IMR-90 (cell line): ENCODE measurements at regions of chr18 and their contacts with region 1.

Region 1: GRCh38 chr18:6885992-6886796 is 156.7 kb downstream of the ARHGAP28 start:
- DNase-seq: peak; percentile 59
- ATAC-seq: peak; percentile 83
- H3K4me3 ChIP-seq: no peak overlapping the region
- H3K27ac ChIP-seq: no peak overlapping the region; the same call in 1 of the 2 replicates
- H3K4me1 ChIP-seq: peaks cover 3% of the 10 kb centered on the region
- H3K27me3 ChIP-seq: no peaks in the 10 kb centered on the region
- CTCF ChIP-seq: peak; percentile 88
- POLR2A ChIP-seq: 0 out of 2 replicates have a peak, but pooled peaks have one; percentile 40
- RAD21 ChIP-seq: peak; percentile 97

Region 2: DNA sequence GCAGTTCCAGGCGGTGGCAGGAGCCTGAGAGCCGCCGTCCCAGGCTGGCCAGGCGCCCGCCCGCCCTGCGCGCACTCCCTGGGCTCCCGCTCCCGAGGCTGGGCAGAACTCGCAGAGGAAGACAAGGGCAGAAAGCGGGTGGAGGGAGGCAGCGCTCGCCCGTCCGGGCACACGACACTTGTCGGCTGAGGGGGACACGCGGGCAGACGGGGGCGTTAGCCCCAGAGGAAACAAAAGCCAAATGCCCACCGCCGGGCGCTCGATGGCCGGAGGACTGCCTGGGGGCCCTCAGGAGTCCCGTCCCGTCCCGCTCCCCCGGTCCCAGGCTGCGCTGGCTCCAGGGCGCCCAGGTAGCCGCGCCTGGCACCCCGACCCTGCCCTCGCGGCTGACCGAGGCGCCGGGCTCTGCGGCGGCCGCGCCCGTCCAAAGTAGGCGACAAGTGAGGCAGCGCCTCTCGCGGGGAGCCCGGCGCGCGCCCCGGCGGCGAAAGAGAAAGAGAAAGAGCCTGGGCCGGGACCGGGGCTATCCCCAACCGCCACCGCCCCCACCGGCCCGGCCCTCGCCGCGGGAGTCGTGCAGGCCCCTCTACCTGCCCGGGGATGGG is 472.0 kb before region 1 on chr18:
- CTCF ChIA-PET with region 1: no interaction called
- POLR2A ChIA-PET with region 1: no interaction called
- dilution Hi-C with region 1: no loop called
- in situ Hi-C with region 1: no loop called
- intact Hi-C with region 1: loop called (anchors 10 kb)
- DNase-seq: no peak
- ATAC-seq: peak; percentile 93
- H3K4me3 ChIP-seq: peak overlapping the region; percentile 44
- H3K27ac ChIP-seq: no peak overlapping the region
- H3K4me1 ChIP-seq: no peaks in the 10 kb centered on the region
- H3K27me3 ChIP-seq: peaks cover 34% of the 10 kb centered on the region
- CTCF ChIP-seq: no peak
- POLR2A ChIP-seq: no peak
- RAD21 ChIP-seq: no peak

Region 3: GRCh38 chr18:6561420-6561861 is 324.8 kb before region 1 on chr18:
- CTCF ChIA-PET with region 1: interaction called, 9 read pairs
- POLR2A ChIA-PET with region 1: no interaction called
- dilution Hi-C with region 1: no loop called
- in situ Hi-C with region 1: no loop called
- intact Hi-C with region 1: loop called (anchors 5 kb)
- DNase-seq: peak; percentile 67
- ATAC-seq: peak; percentile 76
- H3K4me3 ChIP-seq: no peak overlapping the region
- H3K27ac ChIP-seq: peak overlapping the region; percentile 32; the same call in 1 of the 2 replicates
- H3K4me1 ChIP-seq: peaks cover 3% of the 10 kb centered on the region; the same call in 1 of the 2 replicates
- H3K27me3 ChIP-seq: no peaks in the 10 kb centered on the region
- CTCF ChIP-seq: no peak
- POLR2A ChIP-seq: no peak
- RAD21 ChIP-seq: no peak

Region 4: DNA sequence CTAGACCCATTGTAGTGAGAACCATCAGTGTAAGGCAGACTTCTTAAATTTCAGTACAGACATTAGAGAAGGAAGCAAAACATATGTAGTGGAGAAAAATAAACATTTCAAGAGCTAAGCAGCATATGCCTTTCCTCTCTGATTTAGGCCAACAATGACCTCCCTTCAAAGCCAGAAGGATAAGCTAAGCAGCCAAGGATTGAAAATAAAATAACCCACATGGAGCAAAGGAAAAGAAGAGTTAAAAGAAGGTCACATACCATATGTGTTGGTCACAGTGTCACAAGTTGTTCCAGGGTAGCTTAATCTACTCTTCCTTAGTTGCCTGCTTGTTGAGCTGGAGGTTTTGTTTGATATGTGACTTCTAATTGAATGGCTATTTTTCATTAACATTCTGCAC is 247.0 kb after region 1 on chr18:
- CTCF ChIA-PET with region 1: no interaction called
- POLR2A ChIA-PET with region 1: no interaction called
- dilution Hi-C with region 1: no loop called
- in situ Hi-C with region 1: no loop called
- intact Hi-C with region 1: no loop called
- DNase-seq: peak; percentile 61
- ATAC-seq: peak; percentile 85
- H3K4me3 ChIP-seq: no peak overlapping the region
- H3K27ac ChIP-seq: peak overlapping the region; percentile 42; the same call in 1 of the 2 replicates
- H3K4me1 ChIP-seq: peaks cover 8% of the 10 kb centered on the region; the same call in 1 of the 2 replicates
- H3K27me3 ChIP-seq: no peaks in the 10 kb centered on the region
- CTCF ChIP-seq: no peak
- POLR2A ChIP-seq: no peak
- RAD21 ChIP-seq: no peak

Region 5: GRCh38 chr18:7291046-7291445 is 404.9 kb after region 1 on chr18:
- CTCF ChIA-PET with region 1: no interaction called
- POLR2A ChIA-PET with region 1: no interaction called
- dilution Hi-C with region 1: no loop called
- in situ Hi-C with region 1: no loop called
- intact Hi-C with region 1: no loop called
- DNase-seq: no peak
- ATAC-seq: no peak
- H3K4me3 ChIP-seq: no peak overlapping the region
- H3K27ac ChIP-seq: no peak overlapping the region
- H3K4me1 ChIP-seq: no peaks in the 10 kb centered on the region
- H3K27me3 ChIP-seq: peaks cover 2% of the 10 kb centered on the region; the same call in 1 of the 2 replicates
- CTCF ChIP-seq: no peak
- POLR2A ChIP-seq: no peak
- RAD21 ChIP-seq: no peak